K562 (cell line): ENCODE measurements at regions of chr10 and their contacts with region 1.

Region 1: GRCh38 chr10:96619796-96620773 is 33.3 kb upstream of the TM9SF3 start:
- DNase-seq: no peak
- ATAC-seq: no peak
- H3K4me3 ChIP-seq: no peak overlapping the region
- H3K27ac ChIP-seq: no peak overlapping the region; the same call in 2 of the 3 replicates
- H3K4me1 ChIP-seq: peaks cover 31 to 57% of the 10 kb centered on the region in 2 experiments
- H3K27me3 ChIP-seq: no peaks in the 10 kb centered on the region
- CTCF ChIP-seq: no peak
- EP300 ChIP-seq: no peak
- POLR2A ChIP-seq: no peak
- RAD21 ChIP-seq: no peak

Region 2: GRCh38 chr10:95880704-95881103 is 739.4 kb before region 1 on chr10:
- CTCF ChIA-PET with region 1: no interaction called
- POLR2A ChIA-PET with region 1: no interaction called
- in situ Hi-C with region 1: no loop called
- intact Hi-C with region 1: no loop called
- DNase-seq: no peak
- ATAC-seq: no peak
- H3K4me3 ChIP-seq: no peak overlapping the region
- H3K27ac ChIP-seq: no peak overlapping the region
- H3K4me1 ChIP-seq: no peaks in the 10 kb centered on the region
- H3K27me3 ChIP-seq: no peaks in the 10 kb centered on the region
- CTCF ChIP-seq: no peak
- EP300 ChIP-seq: no peak
- POLR2A ChIP-seq: no peak
- RAD21 ChIP-seq: no peak

Region 3: GRCh38 chr10:96586419-96587263 is 33.4 kb before region 1 on chr10 and contains the start of gene TM9SF3:
- CTCF ChIA-PET with region 1: no interaction called
- POLR2A ChIA-PET with region 1: interaction called, 3 read pairs
- in situ Hi-C with region 1: no loop called
- intact Hi-C with region 1: loop called (anchors 5 kb)
- DNase-seq: peak; percentile 84 to 90 (median 86)
- ATAC-seq: peak; percentile 89
- H3K4me3 ChIP-seq: peak within 1 kb of the TSS; percentile 82
- H3K27ac ChIP-seq: peak within 1 kb of the TSS; percentile 96
- H3K4me1 ChIP-seq: peaks cover 2 to 4% of the 10 kb centered on the region in 2 experiments; a peak in 3 of 5 replicates
- H3K27me3 ChIP-seq: no peaks in the 10 kb centered on the region
- CTCF ChIP-seq: 0 out of 6 replicates have a peak, but pooled peaks of 1 of the 3 experiments have one; percentile 1
- EP300 ChIP-seq: no peak
- POLR2A ChIP-seq: peak; percentile 31; the same call in 1 of the 2 replicates
- RAD21 ChIP-seq: no peak
- polyA plus RNA-seq, gene TM9SF3: 16.1 to 17.3 TPM